SK-N-SH (cell line): ENCODE measurements at regions of chr7 and their contacts with region 1.

Region 1: GRCh38 chr7:54781134-54781912 is 22.3 kb upstream of the SEC61G start:
- DNase-seq: no peak
- H3K4me3 ChIP-seq: no peak overlapping the region
- H3K27ac ChIP-seq: no peak overlapping the region
- H3K4me1 ChIP-seq: no peaks in the 10 kb centered on the region
- H3K27me3 ChIP-seq: no peaks in the 10 kb centered on the region
- CTCF ChIP-seq: no peak
- EP300 ChIP-seq: no peak
- RAD21 ChIP-seq: no peak

Region 2: DNA sequence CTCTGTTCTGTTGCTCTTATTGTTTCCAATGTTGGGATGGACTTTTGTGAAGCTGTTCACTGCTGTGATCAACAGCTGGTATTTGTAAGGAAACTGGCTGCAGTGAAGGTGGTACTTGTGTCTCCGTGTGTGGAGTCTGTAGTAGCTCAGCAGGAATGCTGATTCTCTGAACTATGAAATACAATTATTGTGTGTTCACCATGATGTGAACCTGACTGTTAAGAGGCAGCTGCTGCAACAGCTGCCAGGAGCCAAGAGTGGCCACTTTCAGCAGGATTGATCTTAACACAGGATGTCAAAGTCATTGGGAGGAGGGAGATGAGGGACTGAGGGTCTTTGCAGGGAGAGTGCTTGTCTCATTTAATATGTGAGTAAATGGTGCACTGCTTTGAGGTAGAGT is 225.2 kb before region 1 on chr7:
- CTCF ChIA-PET with region 1: no interaction called
- POLR2A ChIA-PET with region 1: no interaction called
- DNase-seq: no peak
- H3K4me3 ChIP-seq: no peak overlapping the region
- H3K27ac ChIP-seq: no peak overlapping the region
- H3K4me1 ChIP-seq: no peaks in the 10 kb centered on the region
- H3K27me3 ChIP-seq: no peaks in the 10 kb centered on the region
- CTCF ChIP-seq: no peak
- EP300 ChIP-seq: no peak
- RAD21 ChIP-seq: no peak

Region 3: GRCh38 chr7:54839538-54840213 is 58.4 kb after region 1 on chr7:
- CTCF ChIA-PET with region 1: interaction called, 10 read pairs
- POLR2A ChIA-PET with region 1: no interaction called
- DNase-seq: peak; percentile 78
- H3K4me3 ChIP-seq: no peak overlapping the region
- H3K27ac ChIP-seq: no peak overlapping the region
- H3K4me1 ChIP-seq: peaks cover 3 to 6% of the 10 kb centered on the region in 2 experiments; a peak in 3 of 4 replicates
- H3K27me3 ChIP-seq: no peaks in the 10 kb centered on the region
- CTCF ChIP-seq: peak; percentile 91
- EP300 ChIP-seq: no peak
- RAD21 ChIP-seq: peak; percentile 82

Region 4: GRCh38 chr7:54888067-54888733 is 106.9 kb after region 1 on chr7:
- CTCF ChIA-PET with region 1: no interaction called
- POLR2A ChIA-PET with region 1: no interaction called
- DNase-seq: peak; percentile 73
- H3K4me3 ChIP-seq: peak overlapping the region; percentile 36 to 52; a peak in 3 of 4 replicates
- H3K27ac ChIP-seq: no peak overlapping the region
- H3K4me1 ChIP-seq: peaks cover 0 to 10% of the 10 kb centered on the region in 2 experiments; a peak in 2 of 4 replicates
- H3K27me3 ChIP-seq: no peaks in the 10 kb centered on the region
- CTCF ChIP-seq: no peak
- EP300 ChIP-seq: no peak
- RAD21 ChIP-seq: no peak